Heart left ventricle (tissue), 16 donors: ENCODE measurements at regions of chr15 and their contacts with region 1.

Region 1: DNA sequence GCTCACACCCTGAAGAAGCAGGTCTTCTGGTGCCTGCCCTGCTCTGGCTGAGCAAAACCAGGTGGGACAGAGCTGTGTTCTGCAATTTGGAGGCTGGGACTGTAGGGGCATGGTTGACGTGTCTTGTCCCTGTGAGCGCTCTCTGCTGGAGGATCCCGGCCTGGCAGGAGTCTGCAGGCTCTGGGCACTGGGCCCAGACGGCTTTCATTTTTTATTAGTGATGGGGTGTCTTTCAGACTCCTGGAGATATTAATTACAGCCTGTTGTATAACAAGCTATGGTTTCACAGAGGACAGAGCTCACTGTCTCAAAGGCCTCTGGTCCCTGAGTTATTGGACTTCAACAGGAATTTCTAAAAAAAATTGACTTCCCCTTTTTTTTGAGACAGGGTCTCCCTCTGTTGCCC is 29.5 kb upstream of the ZNF710 start:
- DNase-seq: peak; percentile 32 to 71 (median 46)
- ATAC-seq: peak; percentile 42 to 86 (median 76)
- H3K4me3 ChIP-seq: no peak overlapping the region
- H3K27ac ChIP-seq: peak overlapping the region in 1 of 12 donors; percentile 30
- H3K4me1 ChIP-seq: peaks cover 0 to 49% (median 0%) of the 10 kb centered on the region in 12 donors
- H3K27me3 ChIP-seq: no peaks in the 10 kb centered on the region
- CTCF ChIP-seq: peak in 11 of 12 donors; percentile 19 to 61 (median 41)
- POLR2A ChIP-seq: no peak

Region 2: DNA sequence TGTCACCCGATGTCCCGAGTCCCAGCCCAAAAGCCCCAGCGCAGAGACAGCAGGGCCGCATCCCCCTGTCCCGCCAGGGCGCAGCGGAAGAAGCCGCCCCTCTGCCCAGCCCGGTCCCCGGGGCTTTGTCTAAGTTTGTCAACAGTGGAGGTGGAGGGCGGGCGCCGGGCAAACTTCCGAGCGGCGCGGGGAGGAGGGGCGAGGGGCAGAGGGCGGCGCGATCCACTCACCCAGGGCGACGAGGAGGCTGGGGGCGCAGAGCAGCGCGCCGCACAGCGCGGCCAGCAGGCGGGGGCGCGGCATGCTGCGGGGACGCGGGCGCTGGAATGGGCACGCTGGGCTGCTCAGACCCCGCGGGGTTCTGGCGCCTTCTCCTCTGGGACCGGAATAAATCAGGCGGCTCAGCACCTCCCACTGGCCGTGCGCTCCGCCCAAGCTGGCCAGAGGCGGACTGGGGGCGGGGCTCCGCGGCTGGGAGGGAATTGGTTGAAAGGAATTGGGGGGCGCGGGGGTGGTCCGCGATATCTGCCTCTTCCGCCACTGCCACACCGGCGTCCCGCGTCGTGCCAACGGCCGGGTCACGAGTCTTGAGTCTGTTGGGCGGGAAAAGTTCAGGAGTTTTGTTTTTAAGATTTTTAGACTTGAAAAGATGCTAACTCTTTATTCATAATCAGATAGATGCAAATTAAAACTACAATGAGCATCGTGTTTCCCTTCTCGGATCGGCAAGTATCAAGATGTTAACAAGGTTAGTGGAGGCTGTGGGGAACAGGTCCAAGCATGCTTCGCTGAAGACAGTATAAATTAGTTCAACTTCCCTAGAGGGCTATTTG is 1058.4 kb before region 1 on chr15 and contains the start of gene MFGE8:
- intact Hi-C with region 1: no loop called
- DNase-seq: peak; percentile 84 to 90 (median 87)
- ATAC-seq: peak; percentile 40 to 88 (median 79)
- H3K4me3 ChIP-seq: peak within 1 kb of the TSS; percentile 61 to 94 (median 83)
- H3K27ac ChIP-seq: peak within 1 kb of the TSS; percentile 84 to 98 (median 92)
- H3K4me1 ChIP-seq: peaks cover under 1 to 60% (median 37%) of the 10 kb centered on the region in 12 donors
- H3K27me3 ChIP-seq: no peaks in the 10 kb centered on the region
- CTCF ChIP-seq: peak in 6 of 12 donors; percentile 10 to 41 (median 20)
- POLR2A ChIP-seq: peak; percentile 45 to 99
- total RNA-seq, gene MFGE8: 352 to 732 (median 556) TPM

Region 3: DNA sequence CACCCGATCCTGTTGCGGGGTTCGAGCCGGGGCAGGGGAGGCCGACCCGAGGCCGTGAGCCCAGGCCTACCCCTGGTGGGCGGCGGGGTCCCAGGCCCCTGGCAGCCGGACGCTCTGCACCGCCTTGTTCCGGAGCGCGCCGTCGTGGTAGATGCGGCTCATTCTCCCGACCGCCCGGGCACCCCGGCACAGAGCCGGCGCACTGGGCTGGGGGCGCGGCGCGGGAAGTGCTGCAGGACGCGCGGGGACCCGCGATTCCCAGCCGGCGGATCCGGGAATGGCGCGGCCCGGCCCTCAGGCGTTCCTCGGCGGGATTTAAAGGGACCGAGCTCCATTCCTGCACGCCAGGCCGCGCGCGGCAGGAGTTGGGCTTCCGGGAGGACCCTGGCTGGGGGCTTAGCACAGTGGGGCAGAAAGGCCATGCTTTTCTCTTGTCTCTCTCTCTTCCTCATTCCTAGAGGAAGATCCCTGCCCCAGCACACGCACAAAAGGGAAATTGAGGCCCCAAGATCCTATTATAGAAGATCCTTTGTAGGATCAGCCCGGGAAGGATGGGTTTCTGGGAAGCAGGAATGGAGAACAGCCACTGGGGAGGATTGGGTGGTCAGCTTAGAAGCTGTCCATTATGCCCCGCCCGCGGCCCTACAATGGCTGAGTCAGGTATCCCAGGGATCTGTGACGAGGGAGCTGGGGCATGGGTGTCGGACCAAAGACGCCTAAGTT is 58.8 kb before region 1 on chr15 and contains the start of gene ARPIN:
- intact Hi-C with region 1: loop called in 1 of 10 experiments (anchors 10 kb)
- DNase-seq: peak; percentile 65 to 83 (median 66)
- ATAC-seq: peak; percentile 69 to 92 (median 84)
- H3K4me3 ChIP-seq: peak within 1 kb of the TSS; percentile 65 to 99 (median 84)
- H3K27ac ChIP-seq: peak within 1 kb of the TSS in 11 of 12 donors; percentile 41 to 90 (median 77)
- H3K4me1 ChIP-seq: peaks cover 0 to 26% (median 13%) of the 10 kb centered on the region in 12 donors
- H3K27me3 ChIP-seq: no peaks in the 10 kb centered on the region
- CTCF ChIP-seq: no peak
- POLR2A ChIP-seq: no peak
- total RNA-seq, gene ARPIN: 7.3 to 15.3 (median 11.5) TPM